GM12878 (cell line): ENCODE measurements at regions of chr13 and their contacts with region 1.

Region 1: DNA sequence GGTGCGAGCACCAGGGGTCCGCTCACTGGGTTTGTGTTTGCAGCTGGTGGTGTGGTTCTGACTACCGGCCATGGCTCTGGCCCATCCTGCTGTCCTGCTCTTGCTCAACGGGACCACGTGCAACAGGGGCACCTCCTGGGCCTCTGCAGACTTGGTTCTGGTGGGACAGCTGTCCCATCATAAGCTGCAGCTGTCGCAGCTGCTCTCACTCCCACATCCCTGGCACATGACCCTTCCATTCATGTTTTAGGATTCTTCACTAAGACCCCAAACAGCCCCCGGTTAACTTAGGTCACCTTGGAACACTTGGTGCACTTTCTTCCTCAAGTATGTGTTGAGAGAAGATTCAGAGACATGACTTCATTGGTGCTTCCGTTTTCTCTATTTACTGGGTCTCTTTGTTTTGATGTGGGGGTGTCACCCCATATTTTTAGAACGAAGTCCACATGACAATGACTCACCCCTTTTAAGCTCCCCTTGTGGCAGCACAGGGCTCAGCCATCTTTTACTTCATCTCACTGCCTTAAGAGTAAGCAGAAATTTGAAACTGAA is 68.4 kb upstream of the ARHGEF7 start:
- DNase-seq: peak; percentile 36
- ATAC-seq: peak; percentile 85
- H3K4me3 ChIP-seq: no peak overlapping the region
- H3K27ac ChIP-seq: no peak overlapping the region
- H3K4me1 ChIP-seq: peaks cover 12% of the 10 kb centered on the region
- H3K27me3 ChIP-seq: no peaks in the 10 kb centered on the region
- CTCF ChIP-seq: peak; percentile 27 to 50 (median 42); a peak in 5 of 6 replicates
- EP300 ChIP-seq: no peak; a peak in 1 of 4 replicates
- POLR2A ChIP-seq: no peak
- RAD21 ChIP-seq: peak; percentile 47

Region 2: GRCh38 chr13:110471833-110472162 is 574.9 kb before region 1 on chr13:
- CTCF ChIA-PET with region 1: no interaction called
- POLR2A ChIA-PET with region 1: no interaction called
- RAD21 ChIA-PET with region 1: no interaction called
- SMC1A ChIA-PET with region 1: no interaction called
- in situ Hi-C with region 1: no loop called
- intact Hi-C with region 1: loop called (anchors 10 kb)
- DNase-seq: peak; percentile 87
- ATAC-seq: peak; percentile 96
- H3K4me3 ChIP-seq: peak overlapping the region; percentile 42; the same call in 1 of the 2 replicates
- H3K27ac ChIP-seq: peak overlapping the region; percentile 60
- H3K4me1 ChIP-seq: peaks cover 37% of the 10 kb centered on the region
- H3K27me3 ChIP-seq: no peaks in the 10 kb centered on the region
- CTCF ChIP-seq: no peak
- EP300 ChIP-seq: peak; percentile 100
- POLR2A ChIP-seq: peak; percentile 68
- RAD21 ChIP-seq: peak; percentile 3; the same call in 1 of the 2 replicates

Region 3: GRCh38 chr13:110593430-110594130 is 453.1 kb before region 1 on chr13:
- CTCF ChIA-PET with region 1: interaction called, 4 read pairs
- POLR2A ChIA-PET with region 1: no interaction called
- RAD21 ChIA-PET with region 1: interaction called, 3 read pairs
- SMC1A ChIA-PET with region 1: no interaction called
- in situ Hi-C with region 1: loop called (anchors 10 kb)
- intact Hi-C with region 1: loop called (anchors 5 kb)
- DNase-seq: no peak
- ATAC-seq: peak; percentile 97
- H3K4me3 ChIP-seq: no peak overlapping the region
- H3K27ac ChIP-seq: no peak overlapping the region
- H3K4me1 ChIP-seq: no peaks in the 10 kb centered on the region
- H3K27me3 ChIP-seq: no peaks in the 10 kb centered on the region
- CTCF ChIP-seq: peak; percentile 60 to 71 (median 66)
- EP300 ChIP-seq: no peak
- POLR2A ChIP-seq: no peak
- RAD21 ChIP-seq: peak; percentile 86

Region 4: DNA sequence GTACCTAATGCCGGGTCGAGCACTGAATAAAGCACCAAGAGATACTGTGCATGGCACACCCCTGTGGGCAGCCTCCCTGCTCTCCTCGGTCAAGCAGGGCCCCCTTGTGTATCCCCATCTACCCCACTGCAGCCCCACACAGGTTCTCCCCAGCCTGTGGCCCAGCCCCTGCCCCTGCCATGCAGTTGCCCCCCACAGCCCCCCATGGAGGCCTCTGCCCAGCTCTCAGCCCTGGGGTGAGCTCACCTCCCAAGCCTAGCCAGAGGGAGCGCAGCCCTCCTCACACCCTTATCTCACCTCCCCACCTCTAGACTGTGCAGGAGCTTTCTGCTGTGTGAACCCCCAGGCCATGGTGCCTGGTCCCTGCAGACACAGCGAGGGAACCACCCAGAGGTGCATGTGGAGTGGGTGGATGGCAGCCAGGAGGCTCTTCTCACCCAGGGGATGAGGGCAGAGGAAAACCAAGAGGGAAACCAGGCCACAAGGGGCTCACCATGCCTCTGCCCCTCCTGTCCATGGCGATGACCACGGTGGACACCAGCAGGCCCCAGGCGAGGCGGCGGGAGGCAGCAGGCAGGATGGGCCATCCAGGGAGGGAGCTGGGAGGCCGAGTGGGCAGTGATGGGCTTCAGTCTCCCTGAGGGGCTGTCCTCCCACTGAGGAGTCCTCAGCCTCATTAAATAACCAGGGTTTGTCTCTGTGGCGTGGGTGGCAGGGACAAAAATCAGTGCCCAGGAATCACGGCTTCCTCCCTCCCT is 215.0 kb before region 1 on chr13:
- CTCF ChIA-PET with region 1: no interaction called
- POLR2A ChIA-PET with region 1: no interaction called
- RAD21 ChIA-PET with region 1: interaction called, 3 read pairs
- SMC1A ChIA-PET with region 1: interaction called, 3 read pairs
- in situ Hi-C with region 1: no loop called
- intact Hi-C with region 1: loop called (anchors 10 kb)
- DNase-seq: no peak
- ATAC-seq: no peak
- H3K4me3 ChIP-seq: no peak overlapping the region
- H3K27ac ChIP-seq: no peak overlapping the region
- H3K4me1 ChIP-seq: no peaks in the 10 kb centered on the region
- H3K27me3 ChIP-seq: no peaks in the 10 kb centered on the region
- CTCF ChIP-seq: no peak
- EP300 ChIP-seq: no peak
- POLR2A ChIP-seq: no peak
- RAD21 ChIP-seq: no peak

Region 5: GRCh38 chr13:110925023-110925612 is 121.5 kb before region 1 on chr13:
- CTCF ChIA-PET with region 1: interaction called, 3 read pairs
- POLR2A ChIA-PET with region 1: no interaction called
- RAD21 ChIA-PET with region 1: interaction called, 6 read pairs
- SMC1A ChIA-PET with region 1: no interaction called
- in situ Hi-C with region 1: loop called (anchors 5 kb)
- intact Hi-C with region 1: no loop called
- DNase-seq: no peak
- ATAC-seq: no peak
- H3K4me3 ChIP-seq: no peak overlapping the region
- H3K27ac ChIP-seq: no peak overlapping the region
- H3K4me1 ChIP-seq: peaks cover 15% of the 10 kb centered on the region
- H3K27me3 ChIP-seq: no peaks in the 10 kb centered on the region
- CTCF ChIP-seq: peak; percentile 7 to 16 (median 10); a peak in 1 of 6 replicates
- EP300 ChIP-seq: no peak
- POLR2A ChIP-seq: no peak
- RAD21 ChIP-seq: peak; percentile 45; the same call in 1 of the 2 replicates

Region 6: DNA sequence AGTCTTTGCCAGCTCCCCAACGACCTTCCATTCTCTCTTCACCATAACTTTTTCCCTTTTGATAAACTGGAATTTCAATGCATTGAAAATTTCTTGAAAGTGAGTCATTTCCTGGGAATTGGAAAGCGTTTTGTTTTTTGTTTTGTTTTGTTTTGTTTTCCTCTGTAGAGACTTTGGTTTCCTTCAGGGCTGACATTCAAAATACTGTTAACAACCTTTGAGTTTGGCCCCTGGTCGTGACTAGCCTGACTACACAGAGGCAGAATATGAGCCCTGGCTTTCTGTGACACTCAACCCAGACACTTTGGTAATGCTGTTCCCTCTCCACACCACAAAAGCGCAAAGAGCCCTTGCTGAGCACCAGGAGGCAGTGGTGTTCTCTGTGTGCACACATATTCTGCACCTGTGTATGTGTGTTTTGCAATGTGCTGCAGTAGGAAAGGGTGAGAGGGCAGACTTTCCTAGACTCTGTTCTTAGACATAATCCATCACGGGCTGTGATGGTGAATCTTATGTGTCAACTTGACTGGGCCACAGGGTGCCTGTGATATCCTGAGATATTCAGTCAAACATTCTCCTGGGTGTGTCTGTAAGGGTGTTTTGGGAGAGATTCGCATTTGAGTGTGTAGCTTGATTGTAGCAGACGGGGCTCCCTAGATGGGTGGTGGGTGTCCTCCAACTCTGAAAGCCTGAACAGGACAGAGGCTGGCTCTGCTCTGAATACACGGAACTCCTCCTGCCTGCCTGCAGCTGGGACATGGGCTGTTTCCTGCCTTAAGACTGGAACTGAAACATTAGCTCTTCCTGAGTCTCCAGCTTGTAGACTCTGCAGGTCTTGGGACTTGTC is 102.3 kb before region 1 on chr13:
- CTCF ChIA-PET with region 1: interaction called, 33 read pairs
- POLR2A ChIA-PET with region 1: interaction called, 3 read pairs
- RAD21 ChIA-PET with region 1: interaction called, 40 read pairs
- SMC1A ChIA-PET with region 1: interaction called, 28 read pairs
- in situ Hi-C with region 1: no loop called
- intact Hi-C with region 1: loop called (anchors 1 kb)
- DNase-seq: no peak
- ATAC-seq: peak; percentile 86
- H3K4me3 ChIP-seq: no peak overlapping the region
- H3K27ac ChIP-seq: no peak overlapping the region
- H3K4me1 ChIP-seq: peaks cover 8% of the 10 kb centered on the region; the same call in 1 of the 2 replicates
- H3K27me3 ChIP-seq: no peaks in the 10 kb centered on the region
- CTCF ChIP-seq: peak; percentile 48 to 66 (median 63); a peak in 5 of 6 replicates
- EP300 ChIP-seq: no peak
- POLR2A ChIP-seq: no peak
- RAD21 ChIP-seq: peak; percentile 92

Region 7: DNA sequence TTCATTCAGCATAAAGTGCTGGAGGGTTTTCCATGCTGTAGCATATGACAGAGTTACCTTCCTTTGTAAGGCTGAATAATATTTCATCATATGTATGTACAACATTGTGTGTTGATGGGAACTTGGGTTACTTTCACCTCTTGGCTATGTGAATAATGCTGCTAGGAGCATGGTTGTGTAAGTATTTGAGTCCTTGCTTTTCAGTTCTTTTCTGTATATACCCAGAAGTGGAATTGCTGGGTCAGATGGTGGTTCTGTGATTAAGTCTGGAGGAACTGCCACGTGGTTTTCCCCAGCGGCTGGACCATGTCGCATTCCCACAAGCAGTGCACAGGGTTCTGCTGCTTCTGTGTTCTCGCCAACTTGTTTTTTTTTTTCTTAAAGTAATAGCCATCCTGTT is 172.6 kb after region 1 on chr13:
- CTCF ChIA-PET with region 1: no interaction called
- POLR2A ChIA-PET with region 1: no interaction called
- RAD21 ChIA-PET with region 1: no interaction called
- SMC1A ChIA-PET with region 1: no interaction called
- in situ Hi-C with region 1: no loop called
- intact Hi-C with region 1: no loop called
- DNase-seq: no peak
- ATAC-seq: no peak
- H3K4me3 ChIP-seq: no peak overlapping the region
- H3K27ac ChIP-seq: no peak overlapping the region
- H3K4me1 ChIP-seq: peaks cover 3% of the 10 kb centered on the region
- H3K27me3 ChIP-seq: no peaks in the 10 kb centered on the region
- CTCF ChIP-seq: no peak
- EP300 ChIP-seq: no peak
- POLR2A ChIP-seq: no peak
- RAD21 ChIP-seq: no peak